ENCODE measurements at regions of chr7 and their contacts with region 1.

Region 1: DNA sequence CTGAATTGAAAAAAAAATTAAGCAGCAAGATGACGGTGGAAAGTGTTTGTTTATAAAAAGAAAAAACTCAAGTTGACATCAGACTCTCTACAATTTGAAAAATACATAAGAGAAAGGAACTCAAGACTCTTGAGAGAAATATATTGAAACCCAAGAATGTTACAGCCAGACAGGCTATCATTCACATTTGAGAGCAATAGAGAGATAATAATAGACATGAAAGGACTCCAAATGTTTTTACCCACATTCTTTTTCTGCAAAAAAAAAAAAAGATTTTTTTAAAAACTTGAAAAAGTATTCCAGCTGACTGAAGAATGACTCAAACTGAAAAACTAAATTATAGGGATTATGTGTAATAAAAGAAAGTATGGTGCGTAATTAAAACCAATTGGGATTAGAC is 532.4 kb downstream of the INHBA start:
- DNase-seq: no peak
- H3K4me3 ChIP-seq: no peak overlapping the region
- H3K27ac ChIP-seq: no peak overlapping the region
- H3K4me1 ChIP-seq: no peaks in the 10 kb centered on the region
- H3K27me3 ChIP-seq: no peaks in the 10 kb centered on the region
- CTCF ChIP-seq: no peak

Region 2: GRCh38 chr7:40870108-40870507 is 300.4 kb before region 1 on chr7:
- CTCF ChIA-PET with region 1: no interaction called
- dilution Hi-C with region 1: no loop called
- in situ Hi-C with region 1: no loop called
- intact Hi-C with region 1: no loop called
- DNase-seq: no peak
- H3K4me3 ChIP-seq: no peak overlapping the region
- H3K27ac ChIP-seq: no peak overlapping the region
- H3K4me1 ChIP-seq: no peaks in the 10 kb centered on the region
- H3K27me3 ChIP-seq: no peaks in the 10 kb centered on the region
- CTCF ChIP-seq: no peak

Region 3: DNA sequence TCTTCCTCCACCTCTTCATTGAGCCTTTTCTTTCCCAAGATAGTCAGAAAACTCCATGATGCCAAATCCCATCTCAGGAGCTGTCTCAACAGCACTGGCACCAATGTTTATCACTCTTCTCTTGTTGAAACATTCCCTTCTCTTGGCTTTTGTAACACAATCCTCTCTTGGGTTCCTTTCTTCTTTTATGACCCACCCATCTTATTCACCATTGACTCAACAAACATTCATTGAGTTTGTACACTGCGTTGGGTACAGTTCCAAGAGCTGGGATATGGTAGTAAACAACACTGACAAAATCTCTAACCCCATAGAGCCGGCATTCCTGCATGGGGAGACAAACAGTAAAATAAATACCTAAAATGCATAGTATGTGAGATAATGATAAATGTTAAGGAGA is 45.1 kb before region 1 on chr7:
- CTCF ChIA-PET with region 1: no interaction called
- dilution Hi-C with region 1: loop called (anchors 5 kb)
- in situ Hi-C with region 1: no loop called
- intact Hi-C with region 1: no loop called
- DNase-seq: no peak
- H3K4me3 ChIP-seq: no peak overlapping the region
- H3K27ac ChIP-seq: no peak overlapping the region
- H3K4me1 ChIP-seq: peaks cover 26% of the 10 kb centered on the region
- H3K27me3 ChIP-seq: no peaks in the 10 kb centered on the region
- CTCF ChIP-seq: no peak